Right ventricle myocardium inferior (tissue), 1 donor: ENCODE measurements at regions of chr11 and their contacts with region 1.

Region 1: GRCh38 chr11:95835768-95836488 is 45.6 kb downstream of the CEP57 start:
- DNase-seq: peak; percentile 72
- ATAC-seq: peak; percentile 93

Region 2: DNA sequence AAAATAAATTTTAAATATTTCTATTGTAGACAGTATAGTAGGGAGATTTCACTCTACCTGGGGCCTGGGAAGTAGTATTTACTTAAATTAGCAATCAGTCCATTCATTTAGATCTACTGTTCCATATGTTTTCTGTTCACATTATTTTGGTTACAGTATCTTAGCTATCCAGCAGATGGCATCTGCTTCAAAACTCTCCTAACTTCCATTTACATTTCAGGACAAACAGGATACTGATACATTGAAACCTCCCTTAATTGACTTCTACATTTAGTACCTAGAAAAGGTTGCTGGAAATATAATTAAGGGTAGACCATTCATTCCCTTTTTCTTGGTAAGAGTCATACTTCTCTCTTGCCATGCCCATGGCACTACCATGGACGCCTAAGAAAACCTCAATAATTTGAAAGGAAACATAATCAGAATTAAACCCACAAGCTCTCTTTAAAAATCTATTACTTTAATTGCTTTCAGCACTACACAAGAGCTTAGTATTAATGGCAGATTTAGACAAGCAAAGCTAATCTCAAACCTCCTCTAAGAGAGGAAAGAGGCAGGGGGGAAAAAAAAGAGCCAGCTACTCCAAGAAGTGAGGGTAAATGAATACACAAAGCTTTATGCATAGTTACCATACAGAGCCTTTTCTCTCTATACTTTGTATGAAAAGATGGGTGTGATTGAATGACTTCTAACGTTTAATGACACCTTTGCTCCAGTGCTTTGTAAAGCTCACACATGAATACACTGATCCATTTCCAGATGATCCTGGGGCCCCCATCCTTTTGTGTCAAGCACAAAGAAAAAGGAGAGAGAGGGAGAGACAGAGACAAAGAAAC is 219.2 kb after region 1 on chr11:
- intact Hi-C with region 1: loop called (anchors 2 kb)
- DNase-seq: no peak
- ATAC-seq: no peak

Region 3: GRCh38 chr11:96098514-96099241 is 262.8 kb after region 1 on chr11:
- intact Hi-C with region 1: no loop called
- DNase-seq: no peak
- ATAC-seq: peak; percentile 59

Region 4: GRCh38 chr11:96389720-96390487 is 554.0 kb after region 1 on chr11 and contains the starts of genes CCDC82 and JRKL:
- intact Hi-C with region 1: loop called (anchors 10 kb)
- DNase-seq: peak; percentile 98
- ATAC-seq: peak; percentile 100
- total RNA-seq, gene CCDC82: 16.9 TPM
- total RNA-seq, gene JRKL: 6.0 TPM

Region 5: GRCh38 chr11:96424693-96425092 is 588.8 kb after region 1 on chr11:
- intact Hi-C with region 1: loop called (anchors 10 kb)
- DNase-seq: no peak
- ATAC-seq: no peak